Activated CD4-positive, alpha-beta T cell treated with anti-CD3 and anti-CD28 coated beads, Interleukin-2, amount 10 ng/mL, durations not matched to agents 24 days and 14 days (primary cell): ENCODE measurements at regions of chr2 and their contacts with region 1.

Region 1: GRCh38 chr2:9423100-9423921 is at the starts of genes CPSF3 and ITGB1BP1:
- DNase-seq: peak; percentile 99
- H3K4me3 Mint-ChIP-seq: no peak within 1 kb of the TSS
- H3K27ac Mint-ChIP-seq: peak within 1 kb of the TSS; percentile 94
- H3K4me1 Mint-ChIP-seq: peaks cover 34% of the 10 kb centered on the region
- H3K27me3 Mint-ChIP-seq: no peaks in the 10 kb centered on the region
- total RNA-seq, gene CPSF3: 81.4 TPM in 2 replicates
- total RNA-seq, gene ITGB1BP1: 121 and 131 TPM in 2 replicates

Region 2: GRCh38 chr2:9474361-9474967 is 51.2 kb after region 1 on chr2 and contains the start of gene IAH1:
- intact Hi-C with region 1: loop called (anchors 2 kb)
- DNase-seq: peak; percentile 92
- H3K4me3 Mint-ChIP-seq: peak within 1 kb of the TSS; percentile 82
- H3K27ac Mint-ChIP-seq: peak within 1 kb of the TSS; percentile 86
- H3K4me1 Mint-ChIP-seq: peaks cover 31% of the 10 kb centered on the region
- H3K27me3 Mint-ChIP-seq: no peaks in the 10 kb centered on the region
- total RNA-seq, gene IAH1: 76.0 and 78.6 TPM in 2 replicates

Region 3: GRCh38 chr2:9599430-9599829 is 176.1 kb after region 1 on chr2:
- intact Hi-C with region 1: no loop called
- DNase-seq: no peak
- H3K4me3 Mint-ChIP-seq: no peak overlapping the region
- H3K27ac Mint-ChIP-seq: peak overlapping the region; percentile 41
- H3K4me1 Mint-ChIP-seq: peaks cover 34% of the 10 kb centered on the region
- H3K27me3 Mint-ChIP-seq: no peaks in the 10 kb centered on the region

Region 4: DNA sequence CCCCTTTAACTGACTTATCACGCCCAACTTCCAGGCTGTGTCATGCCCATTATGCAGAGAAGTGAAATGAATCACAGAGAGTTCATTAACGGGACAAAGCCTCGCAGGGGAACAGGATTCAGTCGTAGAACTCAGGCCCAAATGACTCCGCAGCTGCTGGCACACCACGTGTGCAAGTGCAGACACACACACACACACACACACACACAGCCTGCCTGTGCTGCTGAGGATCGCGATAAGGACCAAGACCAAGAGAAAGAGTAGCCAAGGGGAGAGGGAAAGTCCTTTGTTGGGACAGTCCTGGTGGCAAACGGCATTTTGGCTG is 329.9 kb after region 1 on chr2:
- intact Hi-C with region 1: loop called (anchors 2 kb)
- DNase-seq: peak; percentile 83
- H3K4me3 Mint-ChIP-seq: peak overlapping the region; percentile 56
- H3K27ac Mint-ChIP-seq: peak overlapping the region; percentile 88
- H3K4me1 Mint-ChIP-seq: peaks cover 59% of the 10 kb centered on the region
- H3K27me3 Mint-ChIP-seq: peaks cover 32% of the 10 kb centered on the region

Region 5: DNA sequence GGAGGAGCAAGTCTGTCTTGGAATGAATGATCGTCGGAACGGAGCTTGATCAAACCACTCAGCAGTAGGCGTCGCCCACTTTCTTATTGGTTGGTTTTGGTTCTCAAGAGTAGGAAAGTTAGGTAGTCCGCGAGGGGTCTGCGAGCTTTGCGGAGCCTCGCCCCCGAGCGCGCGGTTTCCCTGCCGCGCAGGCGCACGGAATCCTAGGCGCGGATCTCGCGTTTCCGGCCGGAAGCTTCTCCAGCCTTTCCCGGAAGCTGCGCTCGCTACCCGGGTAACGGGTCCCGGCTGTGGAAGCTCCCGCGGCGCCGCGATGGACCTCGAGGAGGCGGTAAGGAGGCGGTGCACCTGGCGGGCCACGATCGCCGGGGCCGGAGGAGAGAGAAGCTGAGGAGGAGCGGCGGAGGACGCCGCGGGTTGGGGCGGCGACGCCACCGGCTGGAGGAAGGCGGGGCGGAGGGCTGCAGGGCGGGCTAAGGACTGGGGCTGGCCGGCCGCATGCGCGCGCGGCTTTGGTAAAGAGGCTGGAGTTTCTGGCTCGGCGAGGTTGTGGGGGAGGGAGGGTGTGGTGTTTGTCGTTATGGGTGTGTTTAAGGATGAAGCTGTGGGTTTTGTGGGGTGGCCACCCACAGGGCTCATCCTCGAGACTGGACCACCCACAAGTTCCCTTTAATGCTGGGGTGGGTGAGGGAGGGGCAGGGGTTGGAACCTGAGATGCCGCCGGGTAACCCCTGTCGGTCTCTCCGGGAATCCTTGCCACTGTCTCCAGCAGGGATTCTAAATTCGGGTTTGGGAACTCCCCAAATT is 420.1 kb after region 1 on chr2 and contains the start of gene TAF1B:
- intact Hi-C with region 1: loop called (anchors 1 kb)
- DNase-seq: peak; percentile 97
- H3K4me3 Mint-ChIP-seq: peak within 1 kb of the TSS; percentile 92
- H3K27ac Mint-ChIP-seq: peak within 1 kb of the TSS; percentile 92
- H3K4me1 Mint-ChIP-seq: peaks cover 34% of the 10 kb centered on the region
- H3K27me3 Mint-ChIP-seq: no peaks in the 10 kb centered on the region
- total RNA-seq, gene TAF1B: 21.9 and 22.7 TPM in 2 replicates

Region 6: DNA sequence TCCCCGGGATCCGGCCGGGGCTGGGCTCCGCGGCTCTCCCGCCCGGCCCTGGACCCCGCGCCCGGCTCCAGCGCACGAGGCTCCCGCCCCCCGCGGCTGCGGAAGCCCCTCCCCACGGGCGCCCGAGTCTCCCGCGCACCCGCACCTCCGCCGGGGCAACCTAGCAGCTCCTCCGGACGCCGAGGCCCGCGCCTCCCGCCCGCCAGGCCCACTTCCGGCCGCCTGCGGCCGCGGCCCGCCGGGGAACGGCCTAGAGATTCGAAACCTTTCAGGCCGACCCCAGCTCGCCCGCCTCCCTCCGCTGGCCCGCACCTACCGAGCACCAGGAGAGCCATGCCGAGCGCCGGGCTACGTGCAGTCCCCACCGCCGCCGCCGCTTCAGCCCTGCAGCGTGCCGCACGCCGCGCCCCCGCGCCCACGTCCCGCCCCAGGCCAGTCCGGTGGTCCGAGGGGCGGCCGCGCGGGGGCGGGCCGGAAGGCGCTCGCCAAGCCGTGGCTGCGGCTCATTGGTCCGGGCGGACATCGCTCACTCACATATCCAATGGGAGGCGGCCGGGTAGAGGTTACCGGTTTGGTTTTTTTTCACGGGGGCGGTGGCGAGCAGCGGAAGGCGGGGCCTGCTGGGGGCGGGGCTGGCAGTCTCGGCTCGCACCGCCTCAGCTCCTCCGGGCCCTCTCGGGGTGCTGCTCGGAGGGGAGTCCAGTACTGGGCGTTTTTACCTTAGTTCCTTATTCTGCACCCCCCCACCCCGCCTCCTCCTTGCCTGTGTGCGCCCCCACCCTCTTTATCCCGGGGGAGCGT is 1389.3 kb after region 1 on chr2 and contains the start of gene PDIA6:
- intact Hi-C with region 1: loop called (anchors 5 kb)
- DNase-seq: peak; percentile 99
- H3K4me3 Mint-ChIP-seq: peak within 1 kb of the TSS; percentile 94
- H3K27ac Mint-ChIP-seq: peak within 1 kb of the TSS; percentile 95
- H3K4me1 Mint-ChIP-seq: peaks cover 34% of the 10 kb centered on the region
- H3K27me3 Mint-ChIP-seq: peaks cover 17% of the 10 kb centered on the region
- total RNA-seq, gene PDIA6: 183 and 187 TPM in 2 replicates